Activated naive CD4-positive, alpha-beta T cell treated with anti-CD3 and anti-CD28 coated beads for 36 hours (primary cell): ENCODE measurements at regions of chr7 and their contacts with region 1.

Region 1: DNA sequence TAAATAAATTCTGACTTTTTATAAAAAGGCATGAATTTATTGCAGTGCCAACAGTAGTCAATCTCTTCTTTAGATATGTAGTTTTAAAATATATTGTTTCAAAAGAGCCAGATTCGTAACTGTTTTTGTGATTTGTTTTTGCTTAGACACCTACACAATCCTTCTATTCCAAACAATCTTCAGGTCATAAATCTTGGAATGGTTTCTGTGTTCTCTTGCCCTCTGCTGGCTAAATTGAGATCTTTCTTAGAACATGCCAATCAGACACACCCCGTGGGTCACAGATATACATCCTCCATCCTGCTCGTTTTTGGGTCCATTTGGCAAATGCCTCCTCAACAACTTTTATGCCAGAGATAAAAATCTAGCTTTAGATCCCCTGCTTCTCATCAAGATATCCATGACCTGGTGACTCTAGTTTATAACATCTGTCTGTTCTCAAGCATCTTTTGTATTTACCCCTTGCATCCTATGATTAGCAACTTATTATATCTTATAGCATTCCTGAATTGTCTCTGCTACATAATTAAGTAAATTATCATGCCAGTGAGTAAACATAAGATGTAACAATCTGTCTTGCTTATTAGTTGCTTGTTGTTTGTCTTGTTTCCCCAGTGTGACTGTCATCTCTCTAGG is 35.3 kb upstream of the IFRD1 start:
- DNase-seq: no peak
- H3K4me3 Mint-ChIP-seq: no peak overlapping the region
- H3K27ac Mint-ChIP-seq: no peak overlapping the region
- H3K4me1 Mint-ChIP-seq: no peaks in the 10 kb centered on the region
- H3K27me3 Mint-ChIP-seq: peaks cover 10% of the 10 kb centered on the region

Region 2: GRCh38 chr7:111741811-111742240 is 673.1 kb before region 1 on chr7:
- CTCF ChIA-PET with region 1: no interaction called
- intact Hi-C with region 1: loop called (anchors 2 kb)
- DNase-seq: peak; percentile 55
- H3K4me3 Mint-ChIP-seq: no peak overlapping the region
- H3K27ac Mint-ChIP-seq: no peak overlapping the region
- H3K4me1 Mint-ChIP-seq: no peaks in the 10 kb centered on the region
- H3K27me3 Mint-ChIP-seq: peaks cover 2% of the 10 kb centered on the region

Region 3: GRCh38 chr7:112322070-112322469 is 92.9 kb before region 1 on chr7:
- CTCF ChIA-PET with region 1: no interaction called
- intact Hi-C with region 1: no loop called
- DNase-seq: no peak
- H3K4me3 Mint-ChIP-seq: no peak overlapping the region
- H3K27ac Mint-ChIP-seq: no peak overlapping the region
- H3K4me1 Mint-ChIP-seq: no peaks in the 10 kb centered on the region
- H3K27me3 Mint-ChIP-seq: no peaks in the 10 kb centered on the region

Region 4: DNA sequence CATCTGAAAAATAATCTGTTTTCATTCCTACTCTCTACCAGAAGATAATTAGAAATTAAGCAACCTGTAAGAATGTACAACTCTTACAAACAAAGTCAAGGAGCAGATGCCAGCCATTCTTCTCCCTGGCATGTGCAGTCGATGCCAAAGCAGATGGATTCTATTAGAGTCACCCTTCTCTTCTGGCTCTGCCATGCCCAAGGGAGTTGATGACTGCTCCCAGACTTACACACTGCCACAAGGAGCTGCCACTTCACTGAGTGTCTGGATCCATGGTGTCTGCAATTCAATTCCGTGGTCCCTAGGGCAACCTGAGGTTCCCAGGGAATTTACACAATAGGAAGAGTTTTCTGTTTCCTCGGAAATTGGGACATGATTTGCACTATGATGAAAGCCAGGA is 53.8 kb before region 1 on chr7:
- CTCF ChIA-PET with region 1: no interaction called
- intact Hi-C with region 1: no loop called
- DNase-seq: no peak
- H3K4me3 Mint-ChIP-seq: no peak overlapping the region
- H3K27ac Mint-ChIP-seq: no peak overlapping the region
- H3K4me1 Mint-ChIP-seq: no peaks in the 10 kb centered on the region
- H3K27me3 Mint-ChIP-seq: peaks cover 19% of the 10 kb centered on the region